H1 (cell line): ENCODE measurements at regions of chr6 and their contacts with region 1.

Region 1: GRCh38 chr6:168865-169455 is 123.3 kb upstream of the DUSP22 start:
- DNase-seq: no peak
- H3K4me3 ChIP-seq: no peak overlapping the region
- H3K27ac ChIP-seq: no peak overlapping the region
- H3K4me1 ChIP-seq: no peaks in the 10 kb centered on the region
- H3K27me3 ChIP-seq: no peaks in the 10 kb centered on the region
- CTCF ChIP-seq: peak in 2 of 3 experiments; percentile 38 to 49; a peak in 2 of 4 replicates
- EP300 ChIP-seq: no peak
- POLR2A ChIP-seq: no peak
- RAD21 ChIP-seq: peak; percentile 48 to 52

Region 2: GRCh38 chr6:156010-156409 is 12.9 kb before region 1 on chr6:
- CTCF ChIA-PET with region 1: interaction called, 14 read pairs
- POLR2A ChIA-PET with region 1: no interaction called
- DNase-seq: no peak
- H3K4me3 ChIP-seq: no peak overlapping the region
- H3K27ac ChIP-seq: no peak overlapping the region
- H3K4me1 ChIP-seq: no peaks in the 10 kb centered on the region
- H3K27me3 ChIP-seq: no peaks in the 10 kb centered on the region
- CTCF ChIP-seq: no peak
- EP300 ChIP-seq: no peak
- POLR2A ChIP-seq: no peak
- RAD21 ChIP-seq: no peak

Region 3: GRCh38 chr6:181049-181654 is 12.2 kb after region 1 on chr6:
- CTCF ChIA-PET with region 1: interaction called, 12 read pairs
- POLR2A ChIA-PET with region 1: no interaction called
- DNase-seq: no peak
- H3K4me3 ChIP-seq: no peak overlapping the region
- H3K27ac ChIP-seq: no peak overlapping the region
- H3K4me1 ChIP-seq: no peaks in the 10 kb centered on the region; a peak in 1 of 7 replicates
- H3K27me3 ChIP-seq: no peaks in the 10 kb centered on the region
- CTCF ChIP-seq: no peak
- EP300 ChIP-seq: no peak
- POLR2A ChIP-seq: no peak
- RAD21 ChIP-seq: no peak